H1 (cell line): ENCODE measurements at regions of chr14 and their contacts with region 1.

Region 1: GRCh38 chr14:54805521-54806322 is 96.9 kb downstream of the GCH1 start:
- DNase-seq: peak; percentile 70 to 94
- H3K4me3 ChIP-seq: no peak overlapping the region; a peak in 1 of 8 replicates
- H3K27ac ChIP-seq: no peak overlapping the region
- H3K4me1 ChIP-seq: peaks cover 2 to 15% (median 8%) of the 10 kb centered on the region in 4 experiments; a peak in 5 of 7 replicates
- H3K27me3 ChIP-seq: no peaks in the 10 kb centered on the region; a peak in 1 of 7 replicates
- CTCF ChIP-seq: peak; percentile 89 to 94 (median 92)
- EP300 ChIP-seq: 0 out of 3 replicates have a peak, but pooled peaks of 1 of the 2 experiments have one; percentile 35
- POLR2A ChIP-seq: no peak
- RAD21 ChIP-seq: peak; percentile 93

Region 2: DNA sequence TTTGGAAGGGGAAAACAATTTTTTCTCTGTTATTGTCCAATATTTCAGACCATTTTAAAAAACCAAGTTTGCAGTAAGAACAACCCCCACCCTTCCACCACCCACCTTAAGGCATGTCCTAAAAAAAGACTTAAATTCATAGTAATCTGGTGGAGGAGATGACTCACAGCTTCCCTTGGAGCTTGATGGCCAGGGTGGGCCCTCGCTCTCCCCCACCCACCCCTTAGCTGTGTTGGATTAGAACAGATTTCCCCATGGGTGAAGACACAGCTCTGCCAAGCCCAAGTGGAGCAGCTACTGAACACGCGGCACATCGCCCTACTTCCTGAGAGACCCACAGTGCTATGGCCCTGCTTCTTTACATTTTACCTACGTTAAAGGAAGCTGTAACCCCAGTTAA is 43.4 kb before region 1 on chr14:
- CTCF ChIA-PET with region 1: no interaction called
- POLR2A ChIA-PET with region 1: no interaction called
- DNase-seq: no peak
- H3K4me3 ChIP-seq: no peak overlapping the region
- H3K27ac ChIP-seq: no peak overlapping the region
- H3K4me1 ChIP-seq: no peaks in the 10 kb centered on the region
- H3K27me3 ChIP-seq: no peaks in the 10 kb centered on the region
- CTCF ChIP-seq: no peak
- EP300 ChIP-seq: no peak
- POLR2A ChIP-seq: no peak
- RAD21 ChIP-seq: no peak

Region 3: DNA sequence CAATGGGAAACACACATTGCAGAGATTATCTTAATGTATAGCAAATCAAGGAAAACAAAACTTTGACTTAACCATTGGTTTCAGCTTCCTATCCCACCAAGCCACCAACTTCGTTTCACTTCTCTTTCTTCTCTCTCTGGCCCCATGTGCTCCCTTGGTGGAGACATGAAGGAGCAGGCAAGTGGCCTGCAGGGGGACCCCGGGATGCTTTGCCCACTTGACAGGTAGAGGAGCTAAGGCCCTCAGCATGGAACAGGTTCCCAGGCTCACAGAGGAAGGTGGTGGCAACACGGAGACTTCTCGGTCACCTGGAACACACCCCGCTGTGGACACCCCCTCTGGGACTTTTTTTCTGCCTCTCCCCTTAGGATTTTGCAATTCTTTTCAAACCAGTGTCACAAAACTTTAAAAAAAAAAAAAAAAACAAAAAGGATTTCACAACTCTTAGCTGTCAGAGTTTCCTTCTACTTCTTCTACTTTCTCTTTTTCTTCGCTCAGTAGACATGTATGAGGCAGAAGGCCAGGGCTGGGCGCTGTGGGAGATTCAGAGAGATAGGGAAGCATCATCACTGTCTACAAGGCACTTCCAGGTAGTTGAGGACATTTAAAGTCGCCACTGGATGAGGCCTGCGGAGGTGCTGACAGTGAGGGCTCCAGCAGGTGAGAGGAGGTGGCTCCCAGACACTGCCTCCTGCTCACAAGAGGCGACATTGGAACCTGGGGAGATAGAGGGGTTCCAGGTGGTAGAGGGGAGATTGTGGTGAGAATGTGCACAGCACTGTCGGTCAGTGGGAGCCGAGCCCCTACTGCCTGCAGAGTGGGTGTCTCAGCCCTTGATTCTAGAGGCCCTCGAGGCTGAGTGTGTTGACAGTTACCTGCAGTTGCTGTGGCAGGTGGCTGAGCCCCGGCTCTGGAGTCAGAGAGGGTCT is 22.7 kb before region 1 on chr14:
- CTCF ChIA-PET with region 1: interaction called, 86 read pairs
- POLR2A ChIA-PET with region 1: interaction called, 3 read pairs
- DNase-seq: no peak
- H3K4me3 ChIP-seq: no peak overlapping the region
- H3K27ac ChIP-seq: no peak overlapping the region
- H3K4me1 ChIP-seq: peaks cover 0 to 2% (median 0%) of the 10 kb centered on the region in 4 experiments; a peak in 1 of 7 replicates
- H3K27me3 ChIP-seq: no peaks in the 10 kb centered on the region
- CTCF ChIP-seq: peak; percentile 48 to 65 (median 54)
- EP300 ChIP-seq: no peak
- POLR2A ChIP-seq: no peak
- RAD21 ChIP-seq: peak; percentile 27 to 54

Region 4: GRCh38 chr14:54818201-54819133 is 12.7 kb after region 1 on chr14:
- CTCF ChIA-PET with region 1: interaction called, 39 read pairs
- POLR2A ChIA-PET with region 1: no interaction called
- DNase-seq: no peak
- H3K4me3 ChIP-seq: no peak overlapping the region
- H3K27ac ChIP-seq: no peak overlapping the region
- H3K4me1 ChIP-seq: no peaks in the 10 kb centered on the region
- H3K27me3 ChIP-seq: no peaks in the 10 kb centered on the region
- CTCF ChIP-seq: no peak
- EP300 ChIP-seq: no peak
- POLR2A ChIP-seq: no peak
- RAD21 ChIP-seq: no peak